ENCODE measurements at regions of chr4 and their contacts with region 1.

Region 1: DNA sequence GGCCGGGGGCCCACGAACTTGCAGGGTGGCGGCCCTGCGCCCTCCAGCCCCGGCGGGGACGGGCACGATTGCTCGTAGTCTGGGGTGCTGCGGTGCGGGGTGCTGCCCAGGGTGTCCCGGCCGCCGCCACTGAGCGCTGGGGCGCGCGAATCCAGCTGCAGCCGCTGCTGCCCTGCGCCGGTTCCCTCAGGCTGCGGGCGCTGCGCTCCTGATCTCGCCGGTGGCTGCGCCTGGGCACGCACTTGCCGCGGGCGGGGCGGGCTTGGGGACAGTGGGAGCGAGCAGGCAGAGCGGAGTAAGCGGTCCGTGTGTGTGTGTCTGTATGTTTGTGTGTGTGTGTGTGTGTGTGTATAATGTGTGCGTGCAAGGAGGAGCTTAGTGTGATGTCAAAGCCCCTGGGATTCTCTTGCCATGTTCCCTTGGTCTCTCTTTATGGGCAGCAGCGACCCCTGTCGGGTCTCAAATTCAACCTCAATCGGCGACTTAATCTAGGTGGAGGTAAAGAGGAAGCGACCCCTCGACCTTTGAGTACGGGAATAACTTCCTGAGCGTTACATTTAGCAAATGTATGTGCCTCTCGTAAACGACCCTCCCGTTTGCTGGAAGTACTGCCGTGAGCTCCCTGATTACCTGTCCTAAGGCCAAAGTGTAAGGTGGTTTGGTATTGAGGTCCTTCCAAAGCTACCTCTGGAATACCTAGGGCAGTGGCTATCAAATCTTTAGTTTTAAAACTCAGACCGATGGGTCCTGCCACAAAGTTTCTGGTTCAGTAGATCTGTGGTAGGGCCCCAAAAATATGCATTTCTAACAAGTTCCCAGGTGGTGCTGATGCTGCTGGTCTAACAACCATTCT is at the start of gene RNF150:
- DNase-seq: peak; percentile 51 to 57
- ATAC-seq: peak; percentile 81
- total RNA-seq, gene RNF150: 0.70 to 9.9 TPM

Region 2: GRCh38 chr4:140861359-140862176 is 271.8 kb before region 1 on chr4:
- intact Hi-C with region 1: loop called (anchors 2 to 5 kb)
- DNase-seq: peak; percentile 39 to 59
- ATAC-seq: peak; percentile 49

Region 3: GRCh38 chr4:141246243-141246642 is 112.9 kb after region 1 on chr4:
- intact Hi-C with region 1: no loop called
- DNase-seq: no peak
- ATAC-seq: no peak

Region 4: DNA sequence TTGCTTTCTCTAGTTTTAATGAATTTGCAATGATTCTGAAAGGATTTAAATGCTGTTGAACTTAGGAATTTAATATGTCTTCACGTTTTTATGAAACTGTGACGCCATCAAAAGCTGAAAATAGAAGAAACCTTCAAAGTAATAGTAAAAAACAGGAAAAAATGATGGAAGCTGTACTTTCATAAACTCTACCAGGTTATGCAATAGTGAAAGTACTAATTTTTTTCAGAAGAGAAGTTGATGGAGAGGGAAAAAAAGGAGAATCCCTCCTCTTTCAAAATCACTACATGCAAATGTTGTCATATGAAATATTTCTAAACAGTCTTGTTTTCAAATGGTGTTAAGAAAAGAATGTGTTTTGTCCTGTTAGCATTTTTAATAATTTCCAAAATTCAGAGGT is 160.9 kb after region 1 on chr4:
- intact Hi-C with region 1: no loop called
- DNase-seq: no peak
- ATAC-seq: no peak

Measured in left colon (tissue), 2 donors.